Endothelial cell of umbilical vein (primary cell): ENCODE measurements at regions of chr2 and their contacts with region 1.

Region 1: GRCh38 chr2:137947728-137948336 is 16.4 kb upstream of the HNMT start:
- DNase-seq: peak; percentile 82
- H3K4me3 ChIP-seq: no peak overlapping the region
- H3K27ac ChIP-seq: no peak overlapping the region
- H3K4me1 ChIP-seq: no peaks in the 10 kb centered on the region
- H3K27me3 ChIP-seq: no peaks in the 10 kb centered on the region
- CTCF ChIP-seq: peak; percentile 45 to 62
- POLR2A ChIP-seq: no peak

Region 2: GRCh38 chr2:137910641-137911040 is 37.2 kb before region 1 on chr2:
- CTCF ChIA-PET with region 1: interaction called, 5 read pairs
- POLR2A ChIA-PET with region 1: no interaction called
- dilution Hi-C with region 1: no loop called
- intact Hi-C with region 1: loop called (anchors 1 kb)
- DNase-seq: peak; percentile 52
- H3K4me3 ChIP-seq: no peak overlapping the region
- H3K27ac ChIP-seq: no peak overlapping the region
- H3K4me1 ChIP-seq: peaks cover 4% of the 10 kb centered on the region
- H3K27me3 ChIP-seq: peaks cover 0 to 3% of the 10 kb centered on the region in 2 experiments
- CTCF ChIP-seq: peak; percentile 26
- POLR2A ChIP-seq: no peak

Region 3: GRCh38 chr2:138016351-138017087 is 68.7 kb after region 1 on chr2:
- CTCF ChIA-PET with region 1: no interaction called
- POLR2A ChIA-PET with region 1: no interaction called
- dilution Hi-C with region 1: no loop called
- intact Hi-C with region 1: no loop called
- DNase-seq: no peak
- H3K4me3 ChIP-seq: no peak overlapping the region
- H3K27ac ChIP-seq: no peak overlapping the region
- H3K4me1 ChIP-seq: no peaks in the 10 kb centered on the region
- H3K27me3 ChIP-seq: no peaks in the 10 kb centered on the region
- CTCF ChIP-seq: no peak
- POLR2A ChIP-seq: no peak